Aorta (tissue), 5 donors: ENCODE measurements at regions of chr11 and their contacts with region 1.

Region 1: DNA sequence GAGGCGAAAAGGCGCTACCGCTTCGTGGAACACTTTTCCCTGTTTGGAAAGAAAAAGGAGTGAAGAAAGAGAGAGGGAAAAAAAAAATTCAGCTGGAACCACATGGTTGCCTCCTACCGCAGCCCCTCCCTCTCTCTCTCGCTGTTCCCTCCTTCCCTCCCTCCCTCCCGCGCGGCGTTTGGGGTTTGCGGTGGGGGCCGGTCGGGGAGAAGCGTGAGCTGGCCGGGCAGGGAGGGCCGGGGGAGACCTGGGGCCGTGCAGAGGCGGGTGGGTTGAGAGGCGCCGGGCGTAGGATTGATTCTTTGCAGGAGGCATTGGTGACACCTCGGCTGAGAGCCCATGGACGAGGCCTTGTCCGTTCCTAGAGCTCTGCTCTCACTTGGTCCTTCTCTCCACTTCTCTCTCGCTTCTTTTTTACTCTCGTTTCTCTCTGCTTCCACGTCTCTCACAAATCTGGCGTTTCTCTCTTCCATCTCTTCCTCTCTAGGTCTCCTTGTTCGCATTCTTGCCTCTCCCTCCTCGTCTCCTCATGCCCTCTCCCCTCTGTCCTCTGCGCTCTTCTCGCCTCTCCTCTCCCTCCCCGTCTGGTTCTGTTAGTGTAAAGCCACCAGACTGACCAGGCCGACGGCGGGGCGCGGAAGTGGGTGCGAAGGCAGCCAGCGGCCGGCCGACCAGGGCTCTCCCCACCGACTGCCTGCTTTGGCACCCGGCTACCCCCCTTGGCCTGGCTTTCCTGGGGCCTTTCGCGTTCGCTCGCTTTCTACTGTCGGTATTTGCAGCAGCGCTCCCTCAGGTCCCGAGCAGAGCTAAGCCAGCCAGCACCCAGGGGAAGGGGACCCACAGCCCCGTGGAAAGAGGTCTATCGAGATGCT is at the start of gene CLMP:
- DNase-seq: peak; percentile 79 to 89
- ATAC-seq: peak; percentile 75
- H3K4me3 ChIP-seq: peak within 1 kb of the TSS; percentile 88 to 90
- H3K27ac ChIP-seq: peak within 1 kb of the TSS; percentile 77 to 85
- H3K4me1 ChIP-seq: peaks cover 0 to 7% of the 10 kb centered on the region in 2 donors
- H3K27me3 ChIP-seq: no peaks in the 10 kb centered on the region
- total RNA-seq, gene CLMP: 70.9 to 107 TPM

Region 2: DNA sequence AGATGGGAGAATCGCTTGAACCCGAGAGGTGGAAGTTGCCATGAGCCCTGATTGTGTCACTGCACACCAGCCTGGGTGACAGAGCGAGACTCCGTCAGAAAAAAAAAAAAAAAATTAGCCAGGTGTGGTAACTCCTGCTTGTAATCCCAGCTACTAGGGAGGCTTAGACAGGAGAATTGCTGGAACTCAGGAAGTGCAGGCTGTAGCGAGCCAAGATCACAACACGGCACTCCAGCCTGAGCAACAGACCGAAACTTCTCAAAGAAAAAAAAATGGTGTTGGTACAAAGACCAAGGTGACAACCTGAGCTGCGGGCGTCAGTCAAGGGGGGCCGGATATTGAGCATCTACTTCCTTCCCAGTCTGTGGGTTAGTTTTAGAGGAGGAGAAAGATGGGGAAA is 85.1 kb before region 1 on chr11:
- intact Hi-C with region 1: loop called (anchors 2 to 5 kb)
- DNase-seq: no peak
- ATAC-seq: no peak
- H3K4me3 ChIP-seq: no peak overlapping the region
- H3K27ac ChIP-seq: no peak overlapping the region
- H3K4me1 ChIP-seq: no peaks in the 10 kb centered on the region
- H3K27me3 ChIP-seq: no peaks in the 10 kb centered on the region

Region 3: GRCh38 chr11:123159183-123159857 is 36.1 kb before region 1 on chr11:
- intact Hi-C with region 1: loop called in 1 of 2 experiments (anchors 2 kb)
- DNase-seq: peak in 1 of 2 donors; percentile 78
- ATAC-seq: peak; percentile 57
- H3K4me3 ChIP-seq: no peak overlapping the region
- H3K27ac ChIP-seq: peak overlapping the region; percentile 88 to 98
- H3K4me1 ChIP-seq: peaks cover 0 to 3% of the 10 kb centered on the region in 2 donors
- H3K27me3 ChIP-seq: no peaks in the 10 kb centered on the region

Region 4: GRCh38 chr11:123235117-123235655 is 39.8 kb after region 1 on chr11:
- intact Hi-C with region 1: loop called in 1 of 2 experiments (anchors 2 kb)
- DNase-seq: peak; percentile 57 to 90
- ATAC-seq: no peak
- H3K4me3 ChIP-seq: no peak overlapping the region
- H3K27ac ChIP-seq: no peak overlapping the region
- H3K4me1 ChIP-seq: peaks cover 0 to 1% of the 10 kb centered on the region in 2 donors
- H3K27me3 ChIP-seq: no peaks in the 10 kb centered on the region